Transverse colon (tissue), 4 donors: ENCODE measurements at regions of chr1 and their contacts with region 1.

Region 1: DNA sequence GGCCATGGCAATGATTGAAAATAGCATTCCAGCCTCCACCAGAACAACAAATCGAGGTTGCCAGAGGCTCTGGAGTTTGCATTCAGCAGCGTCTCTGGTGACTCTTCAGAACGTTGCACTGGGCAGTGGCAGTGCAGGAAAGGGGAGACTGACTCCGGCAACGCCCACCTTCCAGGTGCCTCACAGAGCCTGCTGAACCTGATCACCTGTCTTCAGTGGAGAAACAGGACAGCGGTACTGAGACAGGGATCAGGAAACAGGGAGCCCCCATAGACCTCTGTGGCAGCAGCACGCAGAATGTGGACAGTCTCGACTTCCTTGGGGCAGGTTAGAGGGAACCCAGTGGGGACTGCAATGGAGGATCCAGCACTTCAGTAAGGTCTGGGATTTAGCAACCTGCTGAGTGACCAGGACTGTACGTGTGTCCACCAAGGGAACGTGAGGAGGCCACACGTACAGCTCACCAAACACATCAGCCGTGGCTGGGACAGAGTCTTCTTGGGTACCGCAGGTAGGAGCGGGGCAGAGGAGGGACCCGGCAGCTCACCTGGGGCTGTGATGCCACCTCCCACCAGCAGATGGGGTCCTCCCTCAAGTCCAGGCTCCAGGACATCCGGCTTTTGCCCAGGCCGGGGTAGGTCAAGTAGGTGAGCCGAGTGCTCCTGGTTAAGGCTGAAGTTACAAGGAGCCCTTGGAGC is 128.6 kb downstream of the PRDM2 start:
- DNase-seq: peak; percentile 87
- H3K4me3 ChIP-seq: peak overlapping the region in 2 of 4 donors; percentile 15 to 22
- H3K27ac ChIP-seq: peak overlapping the region; percentile 39 to 83 (median 51)
- H3K4me1 ChIP-seq: peaks cover 0 to 26% (median 19%) of the 10 kb centered on the region in 4 donors
- H3K27me3 ChIP-seq: peaks cover 4% of the 10 kb centered on the region
- CTCF ChIP-seq: peak; percentile 55 to 94 (median 80)
- EP300 ChIP-seq: no peak
- POLR2A ChIP-seq: no peak

Region 2: GRCh38 chr1:13792419-13792818 is 36.2 kb before region 1 on chr1:
- in situ Hi-C with region 1: no loop called
- intact Hi-C with region 1: no loop called
- DNase-seq: no peak
- H3K4me3 ChIP-seq: no peak overlapping the region
- H3K27ac ChIP-seq: no peak overlapping the region
- H3K4me1 ChIP-seq: no peaks in the 10 kb centered on the region
- H3K27me3 ChIP-seq: no peaks in the 10 kb centered on the region
- CTCF ChIP-seq: no peak
- EP300 ChIP-seq: no peak
- POLR2A ChIP-seq: no peak

Region 3: DNA sequence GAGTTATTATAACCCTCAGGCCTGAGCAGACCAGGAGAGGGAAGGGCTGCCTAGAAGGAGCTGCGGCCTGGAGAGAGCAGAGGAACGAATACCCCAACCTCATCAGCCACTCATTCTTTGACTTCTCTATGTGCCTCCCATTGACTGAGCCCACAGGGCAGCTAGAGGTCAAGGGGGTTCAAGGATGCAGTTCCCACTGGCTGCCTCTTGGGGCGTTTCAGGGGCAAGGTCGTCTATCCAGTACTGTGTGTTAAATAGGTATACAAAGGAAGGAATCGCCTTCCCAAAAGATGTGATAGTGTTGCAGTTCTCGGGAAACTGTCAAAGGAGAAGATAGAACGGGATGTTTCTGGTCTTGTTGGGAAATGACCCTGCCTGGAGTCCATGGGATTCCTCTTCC is 122.0 kb after region 1 on chr1:
- in situ Hi-C with region 1: loop called in 3 of 4 experiments (anchors 5 to 10 kb)
- intact Hi-C with region 1: no loop called
- DNase-seq: no peak
- H3K4me3 ChIP-seq: no peak overlapping the region
- H3K27ac ChIP-seq: no peak overlapping the region
- H3K4me1 ChIP-seq: no peaks in the 10 kb centered on the region
- H3K27me3 ChIP-seq: no peaks in the 10 kb centered on the region
- CTCF ChIP-seq: peak in 1 of 5 experiments; percentile 6
- EP300 ChIP-seq: no peak
- POLR2A ChIP-seq: no peak

Region 4: DNA sequence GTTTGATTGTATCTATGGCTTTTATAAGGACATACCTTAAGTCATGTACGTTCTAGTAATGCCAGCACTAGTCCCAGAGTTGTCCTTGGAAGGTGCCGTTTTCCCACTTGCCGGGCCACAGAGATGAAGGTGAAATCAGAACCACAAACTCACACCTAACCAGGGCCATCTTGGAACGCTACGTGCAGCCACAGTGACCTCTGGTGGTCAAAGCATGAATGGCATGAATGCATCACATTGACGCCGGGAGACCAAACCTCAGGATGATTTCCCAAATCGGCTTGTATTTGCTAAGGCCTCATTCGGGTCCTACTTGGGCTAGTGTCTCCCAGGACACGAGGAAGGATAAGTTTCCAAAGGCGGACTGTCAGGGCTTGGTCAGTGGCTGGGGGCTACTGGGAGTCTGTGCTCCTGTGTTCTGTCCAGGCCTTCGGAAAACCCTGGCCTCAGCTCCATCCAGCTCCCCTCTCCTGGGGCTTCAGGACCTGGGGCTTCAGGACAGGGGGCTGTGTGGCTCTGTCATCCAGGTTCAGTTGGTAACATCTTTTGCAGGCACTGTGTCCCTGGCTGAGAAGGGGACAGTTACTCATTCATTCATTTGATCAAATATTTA is 131.9 kb after region 1 on chr1:
- in situ Hi-C with region 1: loop called in 3 of 4 experiments (anchors 5 to 10 kb)
- intact Hi-C with region 1: no loop called
- DNase-seq: peak; percentile 73
- H3K4me3 ChIP-seq: no peak overlapping the region
- H3K27ac ChIP-seq: no peak overlapping the region
- H3K4me1 ChIP-seq: no peaks in the 10 kb centered on the region
- H3K27me3 ChIP-seq: no peaks in the 10 kb centered on the region
- CTCF ChIP-seq: peak; percentile 94 to 98 (median 97)
- EP300 ChIP-seq: no peak
- POLR2A ChIP-seq: no peak